Upper lobe of right lung (tissue), 1 donor: ENCODE measurements at regions of chr6 and their contacts with region 1.

Region 1: DNA sequence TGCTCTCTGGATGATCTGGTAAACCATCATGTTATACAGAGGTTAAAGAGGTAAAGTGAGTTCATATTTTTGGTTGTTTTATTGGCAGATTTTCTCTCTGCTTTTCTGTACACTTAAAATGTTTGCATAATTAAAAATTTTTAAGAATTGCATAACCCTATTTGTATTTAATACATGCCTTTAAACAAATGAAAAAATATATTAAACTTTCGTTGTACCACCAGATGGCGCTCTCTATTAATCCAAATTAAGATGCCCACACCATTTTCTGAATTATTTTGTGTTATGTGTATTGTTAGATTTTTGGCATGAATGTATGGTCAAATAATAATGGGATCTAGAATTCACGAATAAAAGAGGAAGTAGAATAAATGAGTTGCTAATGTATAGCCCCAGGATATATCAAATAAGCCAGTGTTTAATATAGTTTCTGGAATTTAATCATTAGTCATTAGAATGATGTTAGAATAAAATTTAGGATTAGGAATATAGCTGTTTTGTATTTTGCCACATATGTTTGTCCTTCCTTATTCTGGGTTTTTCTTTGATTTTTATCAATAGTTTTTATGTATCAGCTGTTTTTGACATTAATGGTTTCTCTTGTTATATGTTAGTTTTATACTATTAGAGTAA is 38.9 kb downstream of the SMAP1 start:
- DNase-seq: no peak
- ATAC-seq: no peak
- H3K4me3 ChIP-seq: no peak overlapping the region
- H3K27ac ChIP-seq: no peak overlapping the region
- H3K4me1 ChIP-seq: peaks cover 4% of the 10 kb centered on the region
- H3K27me3 ChIP-seq: no peaks in the 10 kb centered on the region
- CTCF ChIP-seq: peak; percentile 77

Region 2: DNA sequence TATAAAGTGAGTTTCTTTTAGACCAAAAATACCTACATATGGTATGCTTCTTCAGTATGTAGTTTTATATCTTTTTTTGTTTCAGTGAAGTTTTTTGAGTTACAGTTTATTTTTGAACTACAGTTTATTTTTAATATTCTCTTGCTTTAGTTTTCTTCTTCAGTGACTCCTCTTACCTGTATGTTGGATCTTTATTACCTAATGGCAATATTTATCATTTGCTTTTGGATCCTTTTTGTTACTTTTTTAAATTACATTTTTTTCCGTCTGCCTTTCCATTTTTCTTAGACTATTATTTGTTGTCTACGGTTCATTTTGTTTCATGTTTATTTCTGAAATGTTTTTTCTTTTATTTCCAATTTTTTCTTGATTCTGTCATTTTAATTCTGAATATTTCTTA is 32.9 kb after region 1 on chr6:
- intact Hi-C with region 1: no loop called
- DNase-seq: no peak
- ATAC-seq: no peak
- H3K4me3 ChIP-seq: no peak overlapping the region
- H3K27ac ChIP-seq: no peak overlapping the region
- H3K4me1 ChIP-seq: no peaks in the 10 kb centered on the region
- H3K27me3 ChIP-seq: no peaks in the 10 kb centered on the region
- CTCF ChIP-seq: no peak

Region 3: GRCh38 chr6:70872469-70872868 is 165.9 kb after region 1 on chr6:
- intact Hi-C with region 1: no loop called
- DNase-seq: no peak
- ATAC-seq: no peak
- H3K4me3 ChIP-seq: no peak overlapping the region
- H3K27ac ChIP-seq: no peak overlapping the region
- H3K4me1 ChIP-seq: no peaks in the 10 kb centered on the region
- H3K27me3 ChIP-seq: no peaks in the 10 kb centered on the region
- CTCF ChIP-seq: no peak

Region 4: DNA sequence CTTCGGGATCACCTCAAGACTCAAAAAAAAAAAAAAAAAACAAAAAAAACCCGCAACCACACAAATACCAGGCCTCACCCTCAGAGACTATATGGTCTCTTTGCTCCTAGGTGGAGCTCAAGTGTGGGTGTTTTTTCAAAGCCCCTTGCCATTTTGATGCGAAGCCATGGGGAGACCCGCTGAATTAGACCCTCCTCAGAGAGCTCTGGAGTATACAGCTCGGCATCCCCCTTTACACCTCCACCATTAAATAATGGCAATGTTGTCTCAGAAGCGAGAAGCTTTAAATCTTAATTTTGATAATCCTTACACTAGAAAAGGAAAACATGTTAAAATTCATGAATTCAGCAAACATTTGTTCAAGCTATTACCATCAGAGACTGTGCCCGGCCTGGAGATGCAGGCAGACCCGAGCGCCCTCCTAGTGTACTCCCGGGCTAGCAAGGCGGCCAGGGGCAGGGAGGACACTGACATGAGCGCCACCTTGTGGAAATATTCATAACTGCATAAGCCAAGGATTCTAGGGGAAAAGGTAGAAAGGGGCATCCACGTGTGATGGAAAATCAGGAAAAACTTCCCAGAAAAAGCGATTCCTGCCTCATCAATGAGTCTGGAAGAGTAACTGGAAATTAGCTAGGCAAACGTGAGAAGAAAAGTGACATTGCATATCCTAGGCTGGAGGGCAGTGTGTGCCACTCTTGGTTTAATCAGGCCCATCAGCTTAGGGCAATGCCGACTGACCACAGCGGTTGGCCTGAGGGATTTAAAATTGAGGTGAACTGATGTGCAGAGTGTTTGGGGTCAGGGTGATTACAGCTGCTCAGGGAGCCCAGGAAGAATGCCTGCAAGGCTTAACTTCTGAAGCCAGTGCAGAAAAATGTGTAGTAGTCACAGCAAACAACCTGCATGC is 177.7 kb after region 1 on chr6:
- intact Hi-C with region 1: loop called (anchors 10 kb)
- DNase-seq: peak; percentile 71
- ATAC-seq: peak; percentile 91
- H3K4me3 ChIP-seq: no peak overlapping the region
- H3K27ac ChIP-seq: no peak overlapping the region
- H3K4me1 ChIP-seq: no peaks in the 10 kb centered on the region
- H3K27me3 ChIP-seq: no peaks in the 10 kb centered on the region
- CTCF ChIP-seq: peak; percentile 93